ENCODE measurements at regions of chr17 and their contacts with region 1.

Region 1: GRCh38 chr17:40113110-40113906 is 8.5 kb upstream of the MSL1 start:
- DNase-seq: peak; percentile 100
- H3K4me3 Mint-ChIP-seq: peak overlapping the region; percentile 65
- H3K27ac Mint-ChIP-seq: peak overlapping the region; percentile 74
- H3K4me1 Mint-ChIP-seq: peaks cover 58% of the 10 kb centered on the region
- H3K27me3 Mint-ChIP-seq: no peaks in the 10 kb centered on the region
- CTCF ChIP-seq: no peak

Region 2: GRCh38 chr17:39828443-39828842 is 284.9 kb before region 1 on chr17:
- CTCF ChIA-PET with region 1: interaction called, 12 read pairs
- intact Hi-C with region 1: no loop called
- DNase-seq: peak; percentile 100
- H3K4me3 Mint-ChIP-seq: peak overlapping the region; percentile 36
- H3K27ac Mint-ChIP-seq: peak overlapping the region; percentile 48
- H3K4me1 Mint-ChIP-seq: peaks cover 17% of the 10 kb centered on the region
- H3K27me3 Mint-ChIP-seq: no peaks in the 10 kb centered on the region
- CTCF ChIP-seq: no peak

Region 3: GRCh38 chr17:40038882-40039513 is 74.3 kb before region 1 on chr17:
- CTCF ChIA-PET with region 1: interaction called, 90 read pairs
- intact Hi-C with region 1: loop called (anchors 1 kb)
- DNase-seq: peak; percentile 92
- H3K4me3 Mint-ChIP-seq: no peak overlapping the region
- H3K27ac Mint-ChIP-seq: no peak overlapping the region
- H3K4me1 Mint-ChIP-seq: peaks cover 8% of the 10 kb centered on the region
- H3K27me3 Mint-ChIP-seq: no peaks in the 10 kb centered on the region
- CTCF ChIP-seq: no peak

Region 4: DNA sequence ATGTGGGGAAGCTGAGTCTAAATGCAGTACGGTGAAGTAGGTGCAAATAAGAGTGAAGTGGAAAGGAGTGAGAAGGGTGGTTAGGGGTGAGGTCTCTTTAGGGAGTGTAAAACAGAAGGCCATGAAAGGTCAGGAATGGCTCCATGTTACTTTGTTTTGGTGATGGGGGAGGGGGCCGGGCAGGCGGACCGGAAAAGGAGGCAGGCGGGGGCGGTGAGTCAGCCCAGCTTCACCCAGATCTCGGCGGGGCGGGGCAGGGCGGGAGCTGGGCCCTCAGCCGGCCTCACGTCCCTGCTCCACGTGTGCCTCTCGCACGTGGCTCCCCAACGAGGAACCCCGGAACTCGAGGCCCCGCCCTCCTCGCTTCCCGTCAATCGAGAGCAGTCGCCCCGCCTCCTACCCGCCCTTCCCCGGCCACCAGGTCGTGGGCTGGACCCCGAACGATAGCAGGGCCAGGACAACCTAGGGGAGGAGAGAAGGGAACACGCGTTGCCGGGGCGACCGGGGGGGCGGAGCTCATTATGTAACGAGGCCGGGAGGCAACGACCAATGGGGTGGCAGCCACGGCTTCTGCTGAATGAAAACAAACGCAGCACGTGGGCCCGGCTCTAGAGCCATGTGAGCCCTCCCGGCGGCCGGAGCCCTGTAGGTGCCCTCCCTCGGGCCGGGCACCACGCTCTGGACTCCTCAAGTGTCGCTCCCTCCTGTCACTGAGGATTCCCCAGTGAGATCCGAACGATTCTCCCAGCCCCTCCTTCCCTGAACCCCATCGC is 14.3 kb before region 1 on chr17:
- CTCF ChIA-PET with region 1: interaction called, 674 read pairs
- intact Hi-C with region 1: no loop called
- DNase-seq: peak; percentile 100
- H3K4me3 Mint-ChIP-seq: peak overlapping the region; percentile 80
- H3K27ac Mint-ChIP-seq: peak overlapping the region; percentile 85
- H3K4me1 Mint-ChIP-seq: peaks cover 73% of the 10 kb centered on the region
- H3K27me3 Mint-ChIP-seq: no peaks in the 10 kb centered on the region
- CTCF ChIP-seq: no peak

Region 5: GRCh38 chr17:40177275-40177874 is 64.1 kb after region 1 on chr17 and contains the start of gene RAPGEFL1:
- CTCF ChIA-PET with region 1: interaction called, 102 read pairs
- intact Hi-C with region 1: loop called (anchors 2 kb)
- DNase-seq: peak; percentile 100
- H3K4me3 Mint-ChIP-seq: peak within 1 kb of the TSS; percentile 76
- H3K27ac Mint-ChIP-seq: peak within 1 kb of the TSS; percentile 61
- H3K4me1 Mint-ChIP-seq: peaks cover 51% of the 10 kb centered on the region
- H3K27me3 Mint-ChIP-seq: no peaks in the 10 kb centered on the region
- CTCF ChIP-seq: no peak
- total RNA-seq, gene RAPGEFL1: 57.9 and 86.3 TPM in 2 replicates

Region 6: DNA sequence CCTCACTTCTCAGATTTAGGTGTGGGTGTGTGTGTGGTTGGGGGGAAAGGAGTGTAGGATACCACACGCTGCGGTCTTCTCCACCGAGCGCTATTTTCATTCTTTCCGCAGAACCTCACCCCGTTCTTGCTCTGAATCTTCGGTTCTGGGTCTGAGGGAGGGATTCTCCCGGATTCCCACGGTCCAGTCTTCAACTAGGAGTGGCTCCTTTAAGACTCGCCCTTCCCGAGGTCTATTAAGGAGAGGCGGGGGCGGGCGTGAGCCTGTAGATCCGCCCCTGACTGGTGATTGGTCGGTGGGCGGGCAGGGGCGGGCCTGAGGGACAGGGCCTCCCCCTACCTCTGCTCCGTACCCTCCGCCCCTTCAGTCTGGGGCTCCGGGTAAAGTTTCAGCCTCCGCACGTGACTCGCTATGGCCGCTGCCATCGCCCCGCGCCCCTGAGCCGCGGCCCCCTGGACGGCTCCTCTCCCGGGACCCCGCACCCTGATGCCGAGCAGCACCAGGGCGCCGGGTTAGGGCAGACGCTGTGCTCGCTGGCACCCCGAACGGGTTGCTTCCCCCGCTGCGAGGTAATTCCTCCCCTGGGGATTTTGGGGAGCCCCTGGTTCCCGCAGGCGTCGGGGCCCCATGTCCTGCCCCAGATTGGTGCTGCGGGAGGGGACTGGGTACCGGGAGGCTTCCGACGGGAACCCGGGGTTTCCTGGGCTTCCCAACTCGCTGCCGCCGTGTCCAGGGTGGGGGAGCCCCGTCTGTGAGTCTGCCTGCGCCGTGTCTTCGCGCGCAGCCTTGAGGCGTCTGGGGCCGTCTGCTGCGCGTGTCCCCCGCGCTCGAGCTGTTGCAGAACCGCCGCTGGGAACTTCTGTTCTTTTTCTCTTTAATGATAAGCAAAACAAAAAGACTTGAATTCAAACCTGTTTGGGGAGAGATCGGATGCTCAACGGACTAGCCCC is 204.8 kb after region 1 on chr17:
- CTCF ChIA-PET with region 1: interaction called, 11 read pairs
- intact Hi-C with region 1: no loop called
- DNase-seq: peak; percentile 100
- H3K4me3 Mint-ChIP-seq: peak overlapping the region; percentile 89
- H3K27ac Mint-ChIP-seq: peak overlapping the region; percentile 71
- H3K4me1 Mint-ChIP-seq: peaks cover 45% of the 10 kb centered on the region
- H3K27me3 Mint-ChIP-seq: no peaks in the 10 kb centered on the region
- CTCF ChIP-seq: no peak

Measured in Calu3 (cell line).